ENCODE measurements at regions of chr2 and their contacts with region 1.

Region 1: DNA sequence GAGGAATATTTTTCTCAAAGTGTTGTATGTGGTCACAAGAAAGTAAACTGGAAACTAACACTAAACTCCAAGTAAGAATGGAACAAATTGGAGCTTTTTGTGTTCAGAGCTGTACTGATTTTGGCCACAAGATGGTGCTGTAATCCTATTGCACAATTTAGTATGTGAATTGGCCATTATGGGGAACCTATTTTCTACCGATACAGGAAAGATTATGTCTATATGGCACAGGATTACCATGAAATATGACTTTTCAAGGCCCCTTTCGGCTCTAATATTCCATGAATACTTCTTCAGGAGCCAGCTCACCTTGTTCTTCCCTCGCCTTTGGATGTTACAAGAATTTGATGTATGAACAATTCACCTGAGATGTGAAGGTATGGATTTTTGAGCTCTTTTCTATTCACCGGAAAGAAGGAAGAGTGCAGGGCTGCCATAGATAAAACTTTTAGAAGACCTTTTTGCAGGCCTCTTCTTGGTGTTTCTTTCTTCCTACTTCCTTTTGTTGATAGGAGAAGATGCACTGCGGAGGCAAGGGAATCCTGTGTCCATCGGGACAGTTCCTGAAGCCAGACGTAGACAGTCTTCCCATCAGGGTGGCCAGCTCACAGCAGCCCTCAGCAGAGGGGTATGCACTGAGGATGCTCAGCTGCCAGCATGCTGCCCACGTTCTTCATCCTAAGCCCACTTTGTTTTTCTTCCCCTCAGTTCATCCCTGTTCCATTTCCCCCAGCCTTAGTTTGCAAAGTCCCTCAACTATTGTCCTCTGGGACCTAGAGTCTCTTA is 13.3 kb downstream of the MRPL44 start:
- DNase-seq: peak; percentile 64 to 65
- H3K4me3 ChIP-seq: no peak overlapping the region
- H3K27ac ChIP-seq: no peak overlapping the region
- H3K4me1 ChIP-seq: no peaks in the 10 kb centered on the region
- H3K27me3 ChIP-seq: no peaks in the 10 kb centered on the region
- CTCF ChIP-seq: peak; percentile 100

Region 2: GRCh38 chr2:223993621-223994232 is 23.2 kb after region 1 on chr2:
- CTCF ChIA-PET with region 1: interaction called, 22 read pairs
- POLR2A ChIA-PET with region 1: no interaction called
- intact Hi-C with region 1: no loop called
- DNase-seq: peak; percentile 55 to 70
- H3K4me3 ChIP-seq: no peak overlapping the region
- H3K27ac ChIP-seq: no peak overlapping the region
- H3K4me1 ChIP-seq: no peaks in the 10 kb centered on the region
- H3K27me3 ChIP-seq: no peaks in the 10 kb centered on the region
- CTCF ChIP-seq: peak; percentile 98

Region 3: DNA sequence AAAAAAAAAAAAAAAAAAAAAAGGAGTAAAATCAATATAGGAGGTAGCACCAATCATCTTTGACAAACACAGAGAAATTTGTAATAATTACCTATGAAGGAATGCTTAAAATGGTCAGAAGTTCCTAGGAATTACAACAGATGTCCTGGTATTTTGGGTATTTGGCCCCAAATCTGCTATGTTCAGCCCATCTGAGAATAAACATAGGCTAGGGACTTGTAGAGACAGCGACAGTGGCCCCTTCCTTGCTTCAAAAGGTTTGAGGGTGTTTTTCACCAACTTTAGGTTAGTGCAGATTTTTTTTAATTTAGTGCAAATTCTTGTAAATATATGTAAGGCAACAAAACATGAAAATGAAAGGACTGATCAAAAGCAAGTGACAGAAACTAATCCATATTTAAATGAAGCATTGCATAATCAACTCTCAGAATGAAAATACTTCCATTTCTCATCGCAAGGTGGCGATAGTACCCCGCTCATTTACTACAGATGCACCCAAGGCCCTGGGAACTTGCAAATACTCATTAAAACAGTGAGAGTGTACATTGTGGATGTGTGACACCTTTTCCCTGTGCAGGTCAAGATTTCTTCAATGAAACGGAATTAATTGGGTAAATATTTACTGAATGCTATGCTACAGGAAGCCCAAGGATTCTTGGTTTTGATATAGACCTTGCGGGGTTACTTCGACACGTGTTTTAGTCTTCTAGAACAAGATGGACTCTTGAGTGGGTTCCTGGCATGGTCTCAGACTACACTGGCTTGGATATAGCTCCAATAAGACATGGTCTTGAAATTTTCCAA is 386.8 kb after region 1 on chr2:
- CTCF ChIA-PET with region 1: interaction called, 5 read pairs
- POLR2A ChIA-PET with region 1: no interaction called
- intact Hi-C with region 1: loop called (anchors 1 kb)
- DNase-seq: peak; percentile 72 to 77
- H3K4me3 ChIP-seq: no peak overlapping the region
- H3K27ac ChIP-seq: no peak overlapping the region
- H3K4me1 ChIP-seq: peaks cover 16% of the 10 kb centered on the region
- H3K27me3 ChIP-seq: no peaks in the 10 kb centered on the region
- CTCF ChIP-seq: peak; percentile 100

Region 4: GRCh38 chr2:224449212-224450147 is 478.9 kb after region 1 on chr2:
- CTCF ChIA-PET with region 1: interaction called, 5 read pairs
- POLR2A ChIA-PET with region 1: no interaction called
- intact Hi-C with region 1: loop called (anchors 2 kb)
- DNase-seq: peak; percentile 24 to 50
- H3K4me3 ChIP-seq: no peak overlapping the region
- H3K27ac ChIP-seq: no peak overlapping the region
- H3K4me1 ChIP-seq: 0 out of 2 replicates have a peak, but pooled peaks cover 3% of the 10 kb centered on the region
- H3K27me3 ChIP-seq: no peaks in the 10 kb centered on the region
- CTCF ChIP-seq: peak; percentile 85

Region 5: DNA sequence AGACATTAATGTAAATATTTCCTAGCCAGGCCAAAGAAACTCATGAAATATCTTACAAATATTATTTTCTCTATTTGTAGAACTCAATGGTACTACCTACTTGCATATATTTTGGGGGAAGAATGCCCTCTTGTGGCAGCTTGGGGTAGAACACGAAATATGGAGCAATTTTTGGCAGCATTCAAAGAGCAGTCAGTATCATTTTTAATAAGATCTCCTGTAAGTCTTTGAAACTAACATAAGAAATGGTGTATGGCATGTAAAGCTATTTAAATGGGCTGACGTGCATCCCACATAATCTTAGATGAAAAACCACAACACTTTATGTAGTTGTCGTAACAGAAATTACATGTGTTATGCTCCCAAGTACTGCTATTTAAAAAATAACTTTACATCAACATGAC is 807.9 kb after region 1 on chr2:
- CTCF ChIA-PET with region 1: interaction called, 8 read pairs
- POLR2A ChIA-PET with region 1: no interaction called
- intact Hi-C with region 1: loop called (anchors 2 kb)
- DNase-seq: peak; percentile 67 to 75
- H3K4me3 ChIP-seq: no peak overlapping the region
- H3K27ac ChIP-seq: no peak overlapping the region
- H3K4me1 ChIP-seq: peaks cover 2% of the 10 kb centered on the region
- H3K27me3 ChIP-seq: no peaks in the 10 kb centered on the region
- CTCF ChIP-seq: peak; percentile 99

Measured in PC-9 (cell line).